ENCODE measurements at regions of chr20 and their contacts with region 1.

Region 1: DNA sequence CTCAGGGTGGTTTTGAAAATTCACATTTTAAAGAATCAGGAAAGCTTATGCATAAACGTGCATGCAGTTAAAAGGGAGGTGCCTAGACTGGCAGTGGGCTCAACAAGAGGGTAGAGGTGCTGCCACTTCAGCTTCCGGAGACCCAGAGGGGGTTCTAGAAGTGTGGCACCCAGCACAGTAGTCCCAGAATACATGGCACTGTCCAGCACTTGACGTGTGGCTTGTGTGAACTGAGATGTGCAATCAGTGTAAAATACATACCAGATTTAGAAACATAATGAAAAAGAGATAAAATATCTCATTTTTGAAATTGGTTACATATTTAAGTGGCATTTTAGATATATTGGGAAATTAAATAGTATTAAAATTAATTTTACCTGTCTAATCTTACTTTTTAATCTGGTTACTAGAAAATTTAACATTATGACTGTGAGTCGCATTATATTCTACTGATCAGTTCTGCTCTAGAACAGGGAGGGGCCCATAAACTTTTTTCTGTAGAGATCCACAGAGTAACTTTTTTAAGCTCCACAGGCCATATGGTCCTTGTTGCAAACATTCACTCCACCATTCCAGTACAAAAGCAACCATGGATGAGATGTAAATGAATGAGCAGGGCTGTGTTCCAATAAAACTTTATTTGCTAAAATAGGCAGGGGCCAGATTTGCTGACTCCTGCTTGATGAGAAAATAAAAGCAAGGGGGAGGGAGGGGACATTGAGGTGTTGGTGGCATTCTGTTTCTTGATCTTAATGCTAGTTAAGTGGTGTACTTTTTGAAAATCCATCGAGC is 89.5 kb downstream of the RIN2 start:
- DNase-seq: no peak
- ATAC-seq: no peak
- H3K4me3 ChIP-seq: no peak overlapping the region
- H3K27ac ChIP-seq: no peak overlapping the region
- H3K4me1 ChIP-seq: peaks cover 15% of the 10 kb centered on the region
- H3K27me3 ChIP-seq: no peaks in the 10 kb centered on the region
- CTCF ChIP-seq: no peak

Region 2: DNA sequence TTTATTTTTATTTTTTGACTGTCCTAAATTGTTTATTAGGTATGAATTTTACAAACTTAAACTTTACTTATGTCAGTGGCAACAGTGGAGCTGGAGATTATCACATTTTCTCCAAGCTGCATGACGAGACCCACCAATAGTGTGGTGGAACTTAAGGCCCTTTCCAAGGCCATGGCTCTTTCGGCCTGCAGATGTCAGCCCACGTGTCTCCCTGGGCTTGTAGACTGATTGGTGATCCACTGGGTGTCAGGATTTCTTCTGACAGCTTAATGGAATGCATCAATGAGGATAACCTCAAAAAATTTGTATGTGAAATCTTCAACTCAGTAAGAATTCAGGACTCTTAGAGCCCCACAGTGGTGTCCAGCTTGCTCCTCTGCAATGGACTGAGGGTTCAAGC is 1757.5 kb before region 1 on chr20:
- CTCF ChIA-PET with region 1: no interaction called
- POLR2A ChIA-PET with region 1: interaction called, 10 read pairs
- in situ Hi-C with region 1: no loop called
- intact Hi-C with region 1: no loop called
- DNase-seq: no peak
- ATAC-seq: no peak
- H3K4me3 ChIP-seq: no peak overlapping the region
- H3K27ac ChIP-seq: no peak overlapping the region
- H3K4me1 ChIP-seq: no peaks in the 10 kb centered on the region
- H3K27me3 ChIP-seq: no peaks in the 10 kb centered on the region
- CTCF ChIP-seq: no peak

Region 3: GRCh38 chr20:19706463-19706862 is 141.1 kb before region 1 on chr20:
- CTCF ChIA-PET with region 1: no interaction called
- POLR2A ChIA-PET with region 1: no interaction called
- in situ Hi-C with region 1: no loop called
- intact Hi-C with region 1: no loop called
- DNase-seq: no peak
- ATAC-seq: no peak
- H3K4me3 ChIP-seq: no peak overlapping the region
- H3K27ac ChIP-seq: no peak overlapping the region
- H3K4me1 ChIP-seq: peaks cover 12% of the 10 kb centered on the region
- H3K27me3 ChIP-seq: no peaks in the 10 kb centered on the region
- CTCF ChIP-seq: no peak

Measured in Panc1 (cell line).